GM12878 (cell line): ENCODE measurements at regions of chr5 and their contacts with region 1.

Region 1: DNA sequence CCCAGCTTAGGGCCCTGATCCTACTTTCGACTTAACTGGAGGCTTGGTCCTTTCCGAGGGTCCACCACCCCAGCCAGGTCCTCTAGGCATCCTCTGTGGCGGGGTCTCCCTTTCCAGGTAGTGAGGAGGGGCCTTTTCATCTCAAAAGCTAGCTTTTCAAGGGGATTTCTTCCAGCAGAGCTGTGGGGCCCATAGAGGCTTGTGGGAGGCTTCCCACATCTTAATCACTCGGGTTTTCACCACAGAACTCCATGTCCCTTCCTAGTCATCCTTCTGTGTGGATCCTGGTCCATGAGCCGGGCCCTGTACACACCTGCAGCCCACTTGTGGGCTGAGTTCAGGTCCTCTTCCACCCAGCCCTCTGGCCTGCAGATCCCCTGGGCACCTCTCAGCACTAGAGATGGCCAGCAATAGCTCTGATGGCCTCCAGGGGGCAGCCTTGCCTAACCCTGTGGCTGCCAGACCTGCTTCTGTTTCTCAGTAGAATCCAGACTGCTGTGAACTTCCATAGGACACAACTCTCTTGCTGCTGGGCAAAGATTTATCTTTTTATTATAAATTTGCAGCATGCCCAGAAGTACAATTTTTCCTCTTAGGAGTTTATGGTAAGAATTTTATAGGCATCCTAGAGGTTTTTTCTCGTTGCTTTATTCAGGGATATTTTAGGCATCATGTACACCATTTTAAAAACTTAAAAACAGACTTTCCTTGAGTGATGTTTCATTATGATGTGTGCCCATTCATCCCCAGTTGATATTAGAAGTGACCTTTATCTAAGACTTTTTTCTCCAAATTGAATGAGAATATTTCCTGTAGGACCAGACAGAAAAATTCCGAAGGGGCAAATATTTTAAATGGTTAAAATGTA is 208.9 kb downstream of the TRIO start:
- DNase-seq: no peak
- ATAC-seq: peak; percentile 98
- H3K4me3 ChIP-seq: no peak overlapping the region
- H3K27ac ChIP-seq: peak overlapping the region; percentile 11; the same call in 1 of the 2 replicates
- H3K4me1 ChIP-seq: peaks cover 7% of the 10 kb centered on the region; the same call in 1 of the 2 replicates
- H3K27me3 ChIP-seq: no peaks in the 10 kb centered on the region
- CTCF ChIP-seq: peak; percentile 89 to 98 (median 96)
- EP300 ChIP-seq: no peak
- POLR2A ChIP-seq: no peak
- RAD21 ChIP-seq: peak; percentile 81

Region 2: GRCh38 chr5:13994621-13995253 is 357.3 kb before region 1 on chr5:
- CTCF ChIA-PET with region 1: interaction called, 3 read pairs
- POLR2A ChIA-PET with region 1: no interaction called
- RAD21 ChIA-PET with region 1: interaction called, 4 read pairs
- SMC1A ChIA-PET with region 1: interaction called, 11 read pairs
- in situ Hi-C with region 1: loop called (anchors 25 kb)
- intact Hi-C with region 1: loop called (anchors 5 kb)
- DNase-seq: no peak
- ATAC-seq: peak; percentile 42; the same call in 2 of the 3 replicates
- H3K4me3 ChIP-seq: no peak overlapping the region
- H3K27ac ChIP-seq: no peak overlapping the region
- H3K4me1 ChIP-seq: no peaks in the 10 kb centered on the region
- H3K27me3 ChIP-seq: peaks cover 0 to 4% of the 10 kb centered on the region in 2 experiments; a peak in 1 of 4 replicates
- CTCF ChIP-seq: no peak
- EP300 ChIP-seq: no peak
- POLR2A ChIP-seq: no peak
- RAD21 ChIP-seq: no peak

Region 3: GRCh38 chr5:14364576-14365472 is 12.7 kb after region 1 on chr5:
- CTCF ChIA-PET with region 1: interaction called, 34 read pairs
- POLR2A ChIA-PET with region 1: no interaction called
- RAD21 ChIA-PET with region 1: interaction called, 3 read pairs
- SMC1A ChIA-PET with region 1: interaction called, 8 read pairs
- in situ Hi-C with region 1: no loop called
- intact Hi-C with region 1: no loop called
- DNase-seq: no peak
- ATAC-seq: peak; percentile 49; the same call in 2 of the 3 replicates
- H3K4me3 ChIP-seq: no peak overlapping the region
- H3K27ac ChIP-seq: no peak overlapping the region
- H3K4me1 ChIP-seq: no peaks in the 10 kb centered on the region
- H3K27me3 ChIP-seq: no peaks in the 10 kb centered on the region
- CTCF ChIP-seq: peak; percentile 40 to 70 (median 46)
- EP300 ChIP-seq: no peak
- POLR2A ChIP-seq: no peak
- RAD21 ChIP-seq: peak; percentile 38

Region 4: GRCh38 chr5:14644623-14645237 is 292.7 kb after region 1 on chr5:
- CTCF ChIA-PET with region 1: interaction called, 46 read pairs
- POLR2A ChIA-PET with region 1: no interaction called
- RAD21 ChIA-PET with region 1: interaction called, 22 read pairs
- SMC1A ChIA-PET with region 1: interaction called, 23 read pairs
- in situ Hi-C with region 1: loop called (anchors 5 kb)
- intact Hi-C with region 1: loop called (anchors 1 kb)
- DNase-seq: no peak
- ATAC-seq: no peak
- H3K4me3 ChIP-seq: no peak overlapping the region
- H3K27ac ChIP-seq: no peak overlapping the region
- H3K4me1 ChIP-seq: no peaks in the 10 kb centered on the region
- H3K27me3 ChIP-seq: no peaks in the 10 kb centered on the region
- CTCF ChIP-seq: no peak
- EP300 ChIP-seq: no peak
- POLR2A ChIP-seq: no peak
- RAD21 ChIP-seq: no peak

Region 5: GRCh38 chr5:15003511-15003920 is 651.4 kb after region 1 on chr5:
- CTCF ChIA-PET with region 1: no interaction called
- POLR2A ChIA-PET with region 1: no interaction called
- RAD21 ChIA-PET with region 1: no interaction called
- SMC1A ChIA-PET with region 1: no interaction called
- in situ Hi-C with region 1: loop called (anchors 25 kb)
- intact Hi-C with region 1: no loop called
- DNase-seq: peak; percentile 13
- ATAC-seq: peak; percentile 99
- H3K4me3 ChIP-seq: no peak overlapping the region
- H3K27ac ChIP-seq: no peak overlapping the region
- H3K4me1 ChIP-seq: no peaks in the 10 kb centered on the region
- H3K27me3 ChIP-seq: no peaks in the 10 kb centered on the region
- CTCF ChIP-seq: peak; percentile 72 to 88 (median 76); a peak in 5 of 6 replicates
- EP300 ChIP-seq: no peak
- POLR2A ChIP-seq: no peak
- RAD21 ChIP-seq: peak; percentile 84